ENCODE measurements at regions of chr4 and their contacts with region 1.

Region 1: GRCh38 chr4:22515145-22515887 is 550 bp downstream of the ADGRA3 start:
- DNase-seq: peak; percentile 61 to 63
- ATAC-seq: peak; percentile 50 to 84 (median 71)
- H3K4me3 ChIP-seq: peak overlapping the region; percentile 43 to 74 (median 62)
- H3K27ac ChIP-seq: peak overlapping the region; percentile 52 to 88 (median 86)
- H3K4me1 ChIP-seq: peaks cover 2 to 29% (median 7%) of the 10 kb centered on the region in 9 donors
- H3K27me3 ChIP-seq: peaks cover 0 to 18% (median 0%) of the 10 kb centered on the region in 7 donors
- CTCF ChIP-seq: peak in 3 of 9 donors; percentile 34 to 41 (median 39)

Region 2: GRCh38 chr4:22410645-22411247 is 104.6 kb before region 1 on chr4:
- intact Hi-C with region 1: loop called in 1 of 10 experiments (anchors 10 kb)
- DNase-seq: no peak
- ATAC-seq: no peak
- H3K4me3 ChIP-seq: no peak overlapping the region
- H3K27ac ChIP-seq: no peak overlapping the region
- H3K4me1 ChIP-seq: peaks cover 0 to 6% (median 0%) of the 10 kb centered on the region in 9 donors
- H3K27me3 ChIP-seq: no peaks in the 10 kb centered on the region
- CTCF ChIP-seq: peak; percentile 20 to 69 (median 59)

Region 3: GRCh38 chr4:22434895-22435294 is 80.4 kb before region 1 on chr4:
- intact Hi-C with region 1: loop called in 1 of 10 experiments (anchors 5 kb)
- DNase-seq: peak in 1 of 2 donors; percentile 23
- ATAC-seq: peak in 6 of 8 donors; percentile 52 to 87 (median 74)
- H3K4me3 ChIP-seq: no peak overlapping the region
- H3K27ac ChIP-seq: no peak overlapping the region
- H3K4me1 ChIP-seq: no peaks in the 10 kb centered on the region
- H3K27me3 ChIP-seq: no peaks in the 10 kb centered on the region
- CTCF ChIP-seq: peak; percentile 3 to 56 (median 40)

Region 4: GRCh38 chr4:22473268-22473667 is 42.0 kb before region 1 on chr4:
- intact Hi-C with region 1: loop called in 3 of 10 experiments (anchors 1 to 5 kb)
- DNase-seq: no peak
- ATAC-seq: peak in 1 of 8 donors; percentile 59
- H3K4me3 ChIP-seq: no peak overlapping the region
- H3K27ac ChIP-seq: peak overlapping the region in 1 of 10 donors; percentile 63
- H3K4me1 ChIP-seq: peaks cover 0 to 45% (median 8%) of the 10 kb centered on the region in 9 donors
- H3K27me3 ChIP-seq: no peaks in the 10 kb centered on the region
- CTCF ChIP-seq: no peak

Measured in heart right ventricle (tissue), 16 donors.